HepG2 (cell line): ENCODE measurements at regions of chr9 and their contacts with region 1.

Region 1: DNA sequence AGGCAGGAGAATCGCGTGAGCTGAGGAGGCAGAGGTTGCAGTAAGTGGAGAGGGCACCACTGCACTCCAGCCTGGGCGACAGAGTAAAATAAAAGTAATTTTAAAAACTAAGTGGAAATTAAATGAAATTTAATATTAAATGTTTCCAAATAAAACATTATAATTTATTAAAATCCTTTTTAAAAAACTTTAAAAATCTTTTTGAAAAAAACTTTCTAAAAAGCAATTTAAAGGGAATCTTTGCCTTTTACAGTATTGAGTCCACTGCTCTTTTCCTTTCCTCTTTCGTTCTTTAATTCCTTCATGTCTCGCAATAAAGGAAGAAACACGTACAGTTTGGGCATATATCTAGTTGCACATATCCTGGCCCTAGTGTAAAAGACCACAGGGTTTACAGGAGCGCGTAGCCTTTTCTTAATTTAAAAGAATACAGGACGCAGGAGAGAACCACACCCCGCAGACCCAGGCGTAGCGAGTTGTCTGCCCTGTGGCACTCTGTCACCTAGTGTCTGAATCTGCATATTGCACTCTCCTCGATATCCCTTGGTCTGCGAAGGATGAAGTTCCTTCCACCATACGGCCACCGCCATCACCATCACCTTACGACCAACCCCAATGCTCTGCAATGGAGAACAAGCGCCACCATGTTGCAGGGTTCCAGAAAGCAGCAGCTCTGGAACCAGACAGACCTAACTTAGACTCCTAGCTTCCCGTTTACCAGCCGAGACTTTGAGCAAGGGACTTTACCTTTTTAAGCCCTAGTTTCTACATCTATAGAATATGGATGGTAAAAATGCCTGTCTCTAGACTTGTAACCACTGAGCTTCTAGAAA is 77.6 kb upstream of the DMRT1 start:
- DNase-seq: peak; percentile 75
- ATAC-seq: peak; percentile 96
- H3K4me3 ChIP-seq: no peak overlapping the region
- H3K27ac ChIP-seq: no peak overlapping the region
- H3K4me1 ChIP-seq: peaks cover 45% of the 10 kb centered on the region
- H3K27me3 ChIP-seq: no peaks in the 10 kb centered on the region
- CTCF ChIP-seq: peak; percentile 90
- EP300 ChIP-seq: no peak
- POLR2A ChIP-seq: no peak
- RAD21 ChIP-seq: peak; percentile 93

Region 2: DNA sequence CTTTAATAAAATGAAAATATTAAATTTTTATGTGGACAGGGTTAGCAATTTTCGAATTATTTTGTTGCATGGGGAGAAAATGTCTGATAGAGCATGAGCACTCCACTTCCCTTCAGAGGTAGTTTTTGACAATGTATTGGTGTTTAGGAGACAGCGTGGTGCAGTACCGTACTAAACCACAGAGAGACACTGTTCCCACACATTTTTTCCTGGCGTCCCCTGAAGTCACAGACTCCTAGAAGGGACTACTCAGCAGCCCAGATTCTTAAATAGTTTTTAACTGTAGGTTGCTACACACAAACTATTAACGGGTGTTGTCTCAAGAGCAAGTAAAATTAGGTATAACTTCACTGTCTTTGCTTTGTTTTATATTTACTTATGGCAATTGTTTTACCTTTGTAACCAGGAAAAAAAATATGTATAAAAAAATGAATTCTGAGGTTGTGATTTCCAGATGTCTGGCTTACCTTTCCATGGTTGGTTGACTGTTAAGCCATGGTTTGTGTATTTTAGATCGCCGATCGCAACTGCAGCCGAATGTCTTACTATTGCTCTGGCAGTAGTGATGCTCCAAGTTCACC is 378.0 kb before region 1 on chr9:
- CTCF ChIA-PET with region 1: no interaction called
- POLR2A ChIA-PET with region 1: no interaction called
- in situ Hi-C with region 1: no loop called
- intact Hi-C with region 1: loop called (anchors 1 kb)
- DNase-seq: peak; percentile 44
- ATAC-seq: peak; percentile 93
- H3K4me3 ChIP-seq: no peak overlapping the region
- H3K27ac ChIP-seq: no peak overlapping the region
- H3K4me1 ChIP-seq: no peaks in the 10 kb centered on the region
- H3K27me3 ChIP-seq: no peaks in the 10 kb centered on the region
- CTCF ChIP-seq: peak; percentile 83
- EP300 ChIP-seq: no peak
- POLR2A ChIP-seq: no peak
- RAD21 ChIP-seq: peak; percentile 59

Region 3: DNA sequence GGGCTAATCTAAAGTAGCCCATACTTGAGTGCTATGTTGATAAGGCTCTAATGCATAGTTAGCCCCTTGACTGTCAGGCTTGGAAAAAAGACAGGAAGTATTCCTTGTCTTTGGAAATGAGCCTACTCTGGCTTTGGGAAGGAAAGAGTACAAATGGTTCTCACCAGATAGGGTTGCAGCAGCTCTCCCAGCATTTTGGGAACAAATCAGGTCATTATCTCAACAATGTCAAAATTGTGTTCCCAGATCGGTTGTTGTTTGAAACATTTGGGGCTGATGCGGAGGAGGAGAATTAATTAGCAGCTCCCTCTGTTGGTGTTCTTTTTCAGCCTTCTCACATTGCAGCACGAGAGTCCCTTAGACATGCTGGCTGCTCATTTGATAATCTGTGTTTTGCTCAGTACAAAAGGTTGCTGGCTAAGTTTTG is 217.1 kb before region 1 on chr9:
- CTCF ChIA-PET with region 1: no interaction called
- POLR2A ChIA-PET with region 1: no interaction called
- in situ Hi-C with region 1: no loop called
- intact Hi-C with region 1: loop called (anchors 1 kb)
- DNase-seq: peak; percentile 16
- ATAC-seq: peak; percentile 50; the same call in 2 of the 3 replicates
- H3K4me3 ChIP-seq: no peak overlapping the region
- H3K27ac ChIP-seq: no peak overlapping the region
- H3K4me1 ChIP-seq: no peaks in the 10 kb centered on the region
- H3K27me3 ChIP-seq: no peaks in the 10 kb centered on the region
- CTCF ChIP-seq: peak; percentile 44
- EP300 ChIP-seq: no peak
- POLR2A ChIP-seq: no peak
- RAD21 ChIP-seq: 0 out of 2 replicates have a peak, but pooled peaks have one; percentile 26

Region 4: DNA sequence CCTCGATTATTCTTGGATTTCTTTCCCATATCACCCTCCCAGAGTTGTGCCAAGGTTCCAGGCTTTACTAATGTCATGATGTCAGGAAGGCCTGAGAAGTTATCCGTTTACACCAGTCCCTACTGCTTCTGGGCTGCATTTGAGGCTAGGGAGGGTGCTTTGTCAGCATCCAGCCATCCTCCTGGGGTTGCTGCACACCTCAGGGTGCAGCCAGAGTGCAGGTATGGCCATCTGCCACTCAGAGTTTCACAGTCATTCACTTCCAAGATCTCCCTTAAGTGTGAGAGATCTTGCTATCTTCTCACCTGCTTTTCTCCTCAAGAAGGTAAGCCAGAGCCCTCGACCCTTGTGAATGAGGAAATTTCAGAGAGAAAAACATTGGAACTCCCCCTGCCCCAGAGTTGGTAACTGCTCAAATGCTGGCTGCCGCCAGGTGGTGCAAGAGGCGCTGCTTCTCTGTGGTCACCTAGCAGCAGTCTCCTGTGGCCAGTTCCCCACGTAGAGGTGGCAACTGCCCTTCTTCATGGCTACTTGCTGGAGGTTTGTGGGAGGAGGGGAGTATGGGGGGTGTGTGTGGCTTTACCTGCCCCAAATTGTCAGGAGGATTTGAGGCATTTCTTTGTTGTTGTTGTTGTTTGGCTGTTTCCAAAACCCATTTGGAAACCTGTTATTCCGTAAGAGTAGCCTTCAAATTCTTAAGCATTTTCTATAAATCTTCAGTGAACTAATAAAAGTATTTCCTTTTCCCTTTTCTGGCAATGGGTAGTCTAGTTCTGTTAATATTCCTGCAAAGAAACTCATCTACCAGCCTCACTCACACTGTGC is 182.0 kb before region 1 on chr9:
- CTCF ChIA-PET with region 1: interaction called, 16 read pairs
- POLR2A ChIA-PET with region 1: no interaction called
- in situ Hi-C with region 1: no loop called
- intact Hi-C with region 1: loop called (anchors 1 kb)
- DNase-seq: peak; percentile 41
- ATAC-seq: peak; percentile 100
- H3K4me3 ChIP-seq: no peak overlapping the region
- H3K27ac ChIP-seq: no peak overlapping the region
- H3K4me1 ChIP-seq: 0 out of 2 replicates have a peak, but pooled peaks cover 5% of the 10 kb centered on the region
- H3K27me3 ChIP-seq: no peaks in the 10 kb centered on the region
- CTCF ChIP-seq: peak; percentile 85
- EP300 ChIP-seq: no peak
- POLR2A ChIP-seq: no peak
- RAD21 ChIP-seq: peak; percentile 82

Region 5: GRCh38 chr9:613771-614347 is 150.0 kb before region 1 on chr9:
- CTCF ChIA-PET with region 1: interaction called, 51 read pairs
- POLR2A ChIA-PET with region 1: no interaction called
- in situ Hi-C with region 1: loop called (anchors 5 kb)
- intact Hi-C with region 1: loop called (anchors 1 kb)
- DNase-seq: peak; percentile 88
- ATAC-seq: peak; percentile 99
- H3K4me3 ChIP-seq: peak overlapping the region in 2 of 3 experiments; percentile 17 to 26; a peak in 3 of 6 replicates
- H3K27ac ChIP-seq: peak overlapping the region; percentile 36
- H3K4me1 ChIP-seq: peaks cover 39% of the 10 kb centered on the region
- H3K27me3 ChIP-seq: no peaks in the 10 kb centered on the region
- CTCF ChIP-seq: peak; percentile 97
- EP300 ChIP-seq: peak in 1 of 2 experiments; percentile 37; a peak in 1 of 4 replicates
- POLR2A ChIP-seq: no peak
- RAD21 ChIP-seq: peak; percentile 97

Region 6: DNA sequence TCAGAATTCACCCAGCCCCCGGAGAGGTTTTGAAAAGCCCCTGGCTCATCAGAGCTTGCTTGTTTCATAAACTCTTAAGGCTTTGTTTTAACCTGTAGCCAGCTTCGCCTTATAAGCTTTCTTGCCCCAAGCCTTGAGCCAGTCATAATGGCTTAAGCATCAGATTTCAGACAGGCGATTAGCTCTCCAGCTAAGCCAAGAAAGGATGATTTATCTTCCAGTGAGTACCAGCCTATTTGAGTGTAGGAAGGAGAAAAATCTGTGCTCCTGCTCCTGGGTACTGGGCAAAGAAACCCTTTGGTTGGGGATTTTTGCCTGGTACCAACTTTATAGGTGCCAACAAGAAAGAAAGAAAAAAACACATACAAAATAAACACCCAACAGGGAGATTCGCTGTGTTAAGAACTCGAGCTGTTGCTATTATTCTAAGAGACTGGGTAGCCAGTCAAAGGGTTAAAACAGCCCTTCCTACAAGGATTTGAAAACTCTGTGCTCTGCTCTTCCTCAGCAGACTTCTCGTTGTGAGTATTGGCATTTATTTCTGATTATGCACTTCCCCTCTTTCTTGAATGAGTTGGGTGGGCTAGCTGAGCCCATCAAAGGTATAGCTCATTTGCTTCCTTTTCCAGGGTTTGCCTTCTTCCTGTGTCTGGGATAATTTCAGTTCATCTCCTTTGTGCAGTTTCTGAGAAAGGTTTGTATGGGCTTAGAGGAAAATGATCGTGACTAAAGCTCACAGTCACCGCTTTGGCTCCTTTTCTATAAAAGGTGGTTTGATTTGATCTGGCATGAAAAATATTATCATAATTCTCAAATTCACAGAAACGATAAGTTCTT is 79.6 kb before region 1 on chr9:
- CTCF ChIA-PET with region 1: no interaction called
- POLR2A ChIA-PET with region 1: interaction called, 4 read pairs
- in situ Hi-C with region 1: no loop called
- intact Hi-C with region 1: loop called (anchors 2 kb)
- DNase-seq: no peak
- ATAC-seq: no peak
- H3K4me3 ChIP-seq: peak overlapping the region; percentile 67 to 74 (median 67)
- H3K27ac ChIP-seq: peak overlapping the region; percentile 94
- H3K4me1 ChIP-seq: peaks cover 79% of the 10 kb centered on the region
- H3K27me3 ChIP-seq: no peaks in the 10 kb centered on the region; a peak in 1 of 5 replicates
- CTCF ChIP-seq: no peak
- EP300 ChIP-seq: no peak
- POLR2A ChIP-seq: peak in 1 of 2 experiments; percentile 49; a peak in 1 of 4 replicates
- RAD21 ChIP-seq: no peak

Region 7: DNA sequence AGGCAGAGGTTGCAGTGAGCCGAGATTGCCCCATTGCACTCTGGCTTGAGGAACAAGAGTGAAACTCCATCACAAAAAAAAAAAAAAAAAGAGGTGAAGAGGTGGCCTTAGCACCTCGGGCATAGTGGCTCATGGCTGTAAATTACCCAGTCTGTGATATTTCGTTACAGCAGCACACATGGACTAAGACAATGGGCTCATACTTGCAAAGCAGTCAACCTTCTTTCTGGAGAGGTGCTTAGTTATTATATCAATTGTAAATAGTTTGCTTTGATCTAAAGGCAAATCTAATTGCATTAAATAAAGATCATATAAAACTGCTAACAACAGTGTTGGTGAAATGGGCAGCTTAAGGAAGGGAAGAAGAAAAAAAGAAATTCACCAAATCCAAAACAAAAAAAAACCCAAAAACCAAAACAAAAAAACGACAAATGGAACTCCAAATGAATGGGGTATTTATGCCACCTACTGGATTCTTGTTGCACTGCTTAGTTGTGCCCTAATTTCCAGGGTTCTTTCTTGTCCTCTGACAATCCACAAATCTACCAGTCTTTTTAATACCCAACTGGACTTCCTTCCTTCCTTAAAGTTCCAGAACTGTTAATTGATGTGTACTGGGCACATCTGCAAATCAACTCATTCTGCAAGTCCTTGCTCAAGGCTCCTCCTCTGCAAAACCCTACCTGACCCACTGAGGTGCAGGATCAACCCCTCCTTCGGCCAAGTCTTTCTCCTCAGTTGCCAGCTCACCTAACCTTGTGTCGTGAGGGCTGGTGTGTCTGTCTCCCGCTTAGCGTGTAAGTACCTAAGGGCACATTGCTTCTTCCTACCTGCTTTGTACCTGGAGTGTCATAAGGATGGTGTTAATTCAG is 42.6 kb after region 1 on chr9:
- CTCF ChIA-PET with region 1: no interaction called
- POLR2A ChIA-PET with region 1: no interaction called
- in situ Hi-C with region 1: no loop called
- intact Hi-C with region 1: loop called (anchors 5 kb)
- DNase-seq: peak; percentile 35
- ATAC-seq: peak; percentile 79
- H3K4me3 ChIP-seq: no peak overlapping the region
- H3K27ac ChIP-seq: no peak overlapping the region
- H3K4me1 ChIP-seq: no peaks in the 10 kb centered on the region
- H3K27me3 ChIP-seq: no peaks in the 10 kb centered on the region
- CTCF ChIP-seq: peak; percentile 73
- EP300 ChIP-seq: no peak
- POLR2A ChIP-seq: no peak
- RAD21 ChIP-seq: peak; percentile 48